Activated CD4-positive, alpha-beta memory T cell treated with anti-CD3 and anti-CD28 coated beads, Interleukin-2, amount 10 ng/mL, durations not matched to agents 7 days and 5 days (primary cell): ENCODE measurements at regions of chr3 and their contacts with region 1.

Region 1: GRCh38 chr3:195522254-195523023 is 20.7 kb downstream of the PPP1R2 start:
- DNase-seq: no peak
- H3K4me3 Mint-ChIP-seq: no peak overlapping the region
- H3K27ac Mint-ChIP-seq: no peak overlapping the region
- H3K4me1 Mint-ChIP-seq: peaks cover 38% of the 10 kb centered on the region
- H3K27me3 Mint-ChIP-seq: no peaks in the 10 kb centered on the region

Region 2: DNA sequence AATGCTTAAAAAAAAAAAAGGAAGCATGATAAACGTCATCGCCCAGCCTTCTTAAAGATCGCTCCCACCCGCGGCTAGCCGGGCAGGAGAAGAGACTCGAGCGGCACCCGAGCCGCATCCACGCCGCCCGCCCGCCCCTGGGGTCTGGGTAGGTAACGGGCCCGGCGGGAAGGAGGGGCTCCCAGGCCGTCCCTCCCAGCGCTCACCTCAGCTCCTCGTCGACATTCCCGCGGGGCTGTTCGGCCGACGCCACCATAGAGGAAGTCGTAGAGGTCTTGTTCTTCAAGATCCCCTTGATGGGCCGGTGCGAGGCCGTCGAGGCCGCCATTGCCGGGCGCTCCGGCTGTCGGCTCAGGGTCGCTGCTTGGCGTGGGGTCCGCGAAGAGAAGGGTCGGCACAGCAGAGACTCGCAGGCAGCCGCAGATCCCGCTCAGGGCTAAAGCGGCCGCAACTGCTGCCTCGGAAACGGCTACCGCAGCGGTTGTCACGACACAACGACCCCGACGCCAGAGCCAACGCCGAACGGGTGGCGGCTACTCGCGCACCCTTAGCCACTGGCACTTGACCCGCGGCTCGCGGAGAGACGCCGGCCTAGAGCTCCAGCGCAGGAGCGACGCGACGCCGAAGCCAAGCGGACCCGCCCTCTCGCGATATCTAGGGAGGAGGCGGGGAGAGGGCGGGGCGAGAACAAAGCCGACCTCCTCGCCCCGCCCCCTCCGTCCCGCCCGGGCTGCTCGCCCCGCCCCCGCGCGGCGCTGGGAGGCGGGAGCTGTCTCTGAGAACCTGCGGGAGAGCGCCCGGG is 20.5 kb after region 1 on chr3 and contains the start of gene PPP1R2:
- CTCF ChIA-PET with region 1: interaction called, 14 read pairs
- POLR2A ChIA-PET with region 1: interaction called, 19 read pairs
- DNase-seq: peak; percentile 92
- H3K4me3 Mint-ChIP-seq: peak within 1 kb of the TSS; percentile 83
- H3K27ac Mint-ChIP-seq: peak within 1 kb of the TSS; percentile 84
- H3K4me1 Mint-ChIP-seq: peaks cover 77% of the 10 kb centered on the region
- H3K27me3 Mint-ChIP-seq: no peaks in the 10 kb centered on the region
- total RNA-seq, gene PPP1R2: 75.0 to 81.8 TPM

Region 3: DNA sequence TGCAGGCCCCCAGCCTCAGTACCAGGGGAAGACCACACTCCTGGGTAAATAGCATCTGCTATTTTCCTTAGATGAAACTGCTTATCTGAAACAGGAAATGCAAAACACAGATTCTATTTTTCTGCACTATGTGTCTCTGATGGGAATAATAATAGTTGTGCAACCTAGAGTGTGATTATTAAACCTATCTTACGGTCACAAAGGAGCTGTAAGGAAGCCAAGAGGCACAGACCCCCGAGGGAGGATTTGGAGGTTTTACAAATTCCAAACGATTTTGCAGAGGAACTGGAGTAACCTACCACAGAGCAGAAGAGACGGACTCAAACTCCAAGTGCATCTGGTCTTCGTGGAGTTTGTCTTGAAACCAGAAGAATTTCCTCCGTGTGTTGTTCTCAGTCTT is 75.4 kb after region 1 on chr3:
- CTCF ChIA-PET with region 1: no interaction called
- POLR2A ChIA-PET with region 1: no interaction called
- DNase-seq: no peak
- H3K4me3 Mint-ChIP-seq: no peak overlapping the region
- H3K27ac Mint-ChIP-seq: no peak overlapping the region
- H3K4me1 Mint-ChIP-seq: no peaks in the 10 kb centered on the region
- H3K27me3 Mint-ChIP-seq: no peaks in the 10 kb centered on the region